ENCODE measurements at regions of chr2 and their contacts with region 1.

Region 1: GRCh38 chr2:219402665-219403515 is 15.2 kb upstream of the DNPEP start:
- DNase-seq: peak; percentile 58
- H3K4me3 Mint-ChIP-seq: no peak overlapping the region
- H3K27ac Mint-ChIP-seq: no peak overlapping the region
- H3K4me1 Mint-ChIP-seq: no peaks in the 10 kb centered on the region
- H3K27me3 Mint-ChIP-seq: peaks cover 10% of the 10 kb centered on the region

Region 2: GRCh38 chr2:219388127-219388844 is 14.6 kb before region 1 on chr2:
- CTCF ChIA-PET with region 1: interaction called, 27 read pairs
- POLR2A ChIA-PET with region 1: interaction called, 6 read pairs
- DNase-seq: peak; percentile 98
- H3K4me3 Mint-ChIP-seq: peak overlapping the region; percentile 70
- H3K27ac Mint-ChIP-seq: peak overlapping the region; percentile 67
- H3K4me1 Mint-ChIP-seq: peaks cover 16% of the 10 kb centered on the region
- H3K27me3 Mint-ChIP-seq: peaks cover 9% of the 10 kb centered on the region

Measured in activated CD4-positive, alpha-beta memory T cell treated with anti-CD3 and anti-CD28 coated beads, Interleukin-2, amount 10 ng/mL, durations not matched to agents 7 days and 5 days (primary cell).